Activated CD8-positive, alpha-beta T cell treated with anti-CD3 and anti-CD28 coated beads, Interleukin-2, amount 10 ng/mL, durations not matched to agents 7 days and 5 days (primary cell): ENCODE measurements at regions of chr7 and their contacts with region 1.

Region 1: DNA sequence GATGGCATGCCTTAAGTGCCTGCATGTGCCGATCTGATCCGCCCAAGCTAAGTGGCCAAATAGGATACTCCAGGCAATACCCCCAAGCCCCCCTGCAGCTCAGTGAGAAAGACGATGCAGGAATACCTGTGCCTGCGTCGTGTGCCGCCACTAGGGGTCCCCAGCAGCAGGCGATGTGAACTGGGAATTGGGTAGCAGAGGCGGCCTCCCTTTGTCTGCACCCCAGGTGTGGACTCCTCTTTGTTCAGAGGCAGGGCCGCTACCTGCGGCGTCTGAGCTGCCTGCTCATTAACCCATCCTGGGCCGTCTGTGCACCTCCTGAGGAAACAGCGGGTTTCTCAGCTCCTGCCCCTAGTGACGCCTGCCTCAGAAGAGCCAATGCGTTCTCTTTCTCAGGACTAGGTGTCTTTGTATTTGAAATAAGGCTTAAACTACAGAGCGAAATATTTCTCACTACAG is 4.8 kb upstream of the CHN2 start:
- DNase-seq: peak; percentile 72
- ATAC-seq: peak; percentile 54
- H3K4me3 Mint-ChIP-seq: no peak overlapping the region
- H3K27ac Mint-ChIP-seq: no peak overlapping the region
- H3K4me1 Mint-ChIP-seq: no peaks in the 10 kb centered on the region
- H3K27me3 Mint-ChIP-seq: peaks cover 42% of the 10 kb centered on the region

Region 2: GRCh38 chr7:28921822-28922221 is 267.9 kb before region 1 on chr7:
- CTCF ChIA-PET with region 1: interaction called, 27 read pairs
- POLR2A ChIA-PET with region 1: no interaction called
- DNase-seq: peak; percentile 55
- ATAC-seq: peak; percentile 91
- H3K4me3 Mint-ChIP-seq: no peak overlapping the region
- H3K27ac Mint-ChIP-seq: no peak overlapping the region
- H3K4me1 Mint-ChIP-seq: peaks cover 15% of the 10 kb centered on the region
- H3K27me3 Mint-ChIP-seq: peaks cover 14% of the 10 kb centered on the region

Region 3: DNA sequence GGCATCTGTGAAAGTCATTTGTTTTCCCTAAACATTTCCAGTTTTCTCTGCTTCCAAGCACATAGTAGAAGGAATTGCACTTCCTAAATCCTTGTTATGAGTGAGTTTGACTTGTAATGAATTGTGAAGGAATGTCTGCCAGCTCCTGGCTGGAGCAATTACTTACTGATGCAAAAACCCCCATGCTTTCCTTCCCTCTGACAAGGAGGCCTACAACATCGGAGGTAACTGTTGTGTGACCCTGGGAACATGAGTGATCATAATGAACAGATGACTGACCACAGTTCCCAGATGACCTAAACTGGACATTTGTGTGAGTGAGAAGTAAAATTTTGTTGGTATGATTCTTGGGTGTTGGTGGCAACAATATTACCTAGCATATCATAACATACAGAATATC is 22.1 kb before region 1 on chr7:
- CTCF ChIA-PET with region 1: interaction called, 11 read pairs
- POLR2A ChIA-PET with region 1: no interaction called
- DNase-seq: no peak
- ATAC-seq: no peak
- H3K4me3 Mint-ChIP-seq: no peak overlapping the region
- H3K27ac Mint-ChIP-seq: no peak overlapping the region
- H3K4me1 Mint-ChIP-seq: no peaks in the 10 kb centered on the region
- H3K27me3 Mint-ChIP-seq: peaks cover 20% of the 10 kb centered on the region

Region 4: GRCh38 chr7:29204491-29205272 is 14.9 kb after region 1 on chr7:
- CTCF ChIA-PET with region 1: interaction called, 17 read pairs
- POLR2A ChIA-PET with region 1: no interaction called
- DNase-seq: no peak
- ATAC-seq: no peak
- H3K4me3 Mint-ChIP-seq: no peak overlapping the region
- H3K27ac Mint-ChIP-seq: no peak overlapping the region
- H3K4me1 Mint-ChIP-seq: peaks cover 30% of the 10 kb centered on the region
- H3K27me3 Mint-ChIP-seq: peaks cover 9% of the 10 kb centered on the region

Region 5: DNA sequence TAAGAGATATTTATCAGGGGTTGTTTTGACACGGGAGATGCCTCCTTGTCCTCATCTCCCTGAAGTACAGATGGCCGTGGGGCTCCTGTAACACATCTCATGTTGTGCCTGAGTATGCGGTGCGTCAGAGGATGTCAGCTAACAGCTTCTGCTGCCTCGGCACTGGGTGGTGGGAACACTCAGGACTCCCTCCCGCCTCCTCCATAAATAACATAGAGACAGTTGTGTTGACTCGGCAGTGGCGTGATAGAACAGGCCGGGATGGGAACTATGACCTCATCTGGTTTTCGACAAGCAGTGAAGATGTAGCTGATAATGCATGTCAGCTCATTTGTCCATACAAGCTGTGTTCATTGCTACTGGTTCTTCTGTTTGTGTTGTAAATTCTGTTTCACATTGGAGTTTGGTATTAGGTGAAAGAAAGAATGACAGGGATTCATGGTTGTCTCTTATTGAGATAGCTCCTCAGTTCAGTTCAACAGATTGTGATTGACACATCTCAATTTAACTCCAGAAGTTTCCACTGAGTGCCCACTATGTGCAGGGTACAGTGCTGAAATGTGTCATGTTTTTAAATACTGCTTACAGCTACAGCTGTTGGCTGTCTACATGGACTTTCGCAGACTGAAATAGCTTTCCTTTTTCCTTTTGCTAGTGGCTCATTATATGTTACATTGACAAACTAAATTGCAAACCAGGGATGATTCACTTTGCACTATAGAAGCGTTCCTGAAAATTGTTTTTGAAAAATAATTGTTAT is 92.2 kb after region 1 on chr7:
- CTCF ChIA-PET with region 1: interaction called, 12 read pairs
- POLR2A ChIA-PET with region 1: no interaction called
- DNase-seq: no peak
- ATAC-seq: no peak
- H3K4me3 Mint-ChIP-seq: no peak overlapping the region
- H3K27ac Mint-ChIP-seq: no peak overlapping the region
- H3K4me1 Mint-ChIP-seq: peaks cover 35% of the 10 kb centered on the region
- H3K27me3 Mint-ChIP-seq: peaks cover 28% of the 10 kb centered on the region

Region 6: GRCh38 chr7:29337546-29338116 is 147.9 kb after region 1 on chr7:
- CTCF ChIA-PET with region 1: interaction called, 14 read pairs
- POLR2A ChIA-PET with region 1: no interaction called
- DNase-seq: peak; percentile 73
- ATAC-seq: peak; percentile 93
- H3K4me3 Mint-ChIP-seq: peak overlapping the region; percentile 45
- H3K27ac Mint-ChIP-seq: peak overlapping the region; percentile 71
- H3K4me1 Mint-ChIP-seq: peaks cover 44% of the 10 kb centered on the region
- H3K27me3 Mint-ChIP-seq: no peaks in the 10 kb centered on the region

Region 7: GRCh38 chr7:29408841-29409243 is 219.1 kb after region 1 on chr7:
- CTCF ChIA-PET with region 1: interaction called, 46 read pairs
- POLR2A ChIA-PET with region 1: interaction called, 3 read pairs
- DNase-seq: peak; percentile 71
- ATAC-seq: peak; percentile 58
- H3K4me3 Mint-ChIP-seq: no peak overlapping the region
- H3K27ac Mint-ChIP-seq: no peak overlapping the region
- H3K4me1 Mint-ChIP-seq: no peaks in the 10 kb centered on the region
- H3K27me3 Mint-ChIP-seq: no peaks in the 10 kb centered on the region

Region 8: DNA sequence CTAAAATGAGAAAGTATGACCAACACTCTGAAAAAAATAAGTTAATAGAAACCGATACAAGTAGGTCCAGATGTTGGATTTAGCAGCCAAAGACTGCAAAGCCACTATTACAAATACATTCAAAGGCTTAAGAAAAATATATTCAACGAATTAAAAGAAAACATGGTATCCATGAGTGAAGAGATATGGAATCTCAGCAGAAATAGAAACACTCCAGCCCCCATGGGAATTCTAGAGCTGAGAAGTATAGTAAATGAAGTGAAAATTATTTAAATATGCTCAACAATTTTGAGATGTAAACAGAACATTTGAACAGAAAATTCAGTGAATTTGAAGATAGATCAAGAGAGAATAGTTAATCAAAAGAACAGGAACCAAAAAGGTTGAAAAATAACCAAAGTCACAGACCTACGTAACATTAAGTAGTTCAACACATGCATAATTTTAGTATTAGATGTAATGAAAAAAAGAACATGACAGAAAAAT is 544.5 kb after region 1 on chr7:
- CTCF ChIA-PET with region 1: no interaction called
- POLR2A ChIA-PET with region 1: no interaction called
- DNase-seq: no peak
- ATAC-seq: no peak
- H3K4me3 Mint-ChIP-seq: no peak overlapping the region
- H3K27ac Mint-ChIP-seq: no peak overlapping the region
- H3K4me1 Mint-ChIP-seq: no peaks in the 10 kb centered on the region
- H3K27me3 Mint-ChIP-seq: peaks cover 21% of the 10 kb centered on the region